ENCODE measurements at regions of chr6 and their contacts with region 1.

Region 1: GRCh38 chr6:137811121-137811915 is 55.7 kb upstream of the TNFAIP3 start:
- H3K4me3 Mint-ChIP-seq: peak overlapping the region; percentile 60
- H3K27ac Mint-ChIP-seq: peak overlapping the region; percentile 66
- H3K4me1 Mint-ChIP-seq: peaks cover 36% of the 10 kb centered on the region
- H3K27me3 Mint-ChIP-seq: peaks cover 30% of the 10 kb centered on the region

Region 2: DNA sequence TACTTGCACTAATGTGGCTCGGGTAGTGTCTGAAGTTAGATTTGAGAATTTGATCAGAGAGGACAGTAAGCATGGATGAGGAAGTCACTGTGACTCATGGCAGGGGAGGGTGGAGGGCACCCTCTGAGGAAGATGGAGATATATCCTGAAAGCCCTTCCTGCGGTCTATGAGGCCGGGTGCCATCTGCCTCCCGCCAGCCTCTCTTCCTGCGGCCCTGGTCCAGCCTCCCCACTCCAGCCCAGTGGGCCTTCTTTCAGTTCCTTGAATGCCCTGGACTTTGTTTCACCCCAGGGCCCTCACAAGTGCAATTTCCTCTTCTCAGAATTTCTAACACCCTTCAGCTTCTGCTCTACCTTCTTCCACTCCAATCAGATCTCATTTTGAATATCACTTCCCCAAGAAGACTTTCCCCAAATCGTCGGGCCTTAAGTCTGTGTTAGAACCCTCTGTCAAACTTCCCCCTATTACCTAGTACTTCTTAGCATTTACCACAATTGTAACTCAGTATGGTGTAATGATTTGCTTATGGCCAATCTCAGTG is 35.5 kb after region 1 on chr6:
- intact Hi-C with region 1: loop called (anchors 5 kb)
- H3K4me3 Mint-ChIP-seq: no peak overlapping the region
- H3K27ac Mint-ChIP-seq: no peak overlapping the region
- H3K4me1 Mint-ChIP-seq: peaks cover 4% of the 10 kb centered on the region
- H3K27me3 Mint-ChIP-seq: no peaks in the 10 kb centered on the region

Region 3: DNA sequence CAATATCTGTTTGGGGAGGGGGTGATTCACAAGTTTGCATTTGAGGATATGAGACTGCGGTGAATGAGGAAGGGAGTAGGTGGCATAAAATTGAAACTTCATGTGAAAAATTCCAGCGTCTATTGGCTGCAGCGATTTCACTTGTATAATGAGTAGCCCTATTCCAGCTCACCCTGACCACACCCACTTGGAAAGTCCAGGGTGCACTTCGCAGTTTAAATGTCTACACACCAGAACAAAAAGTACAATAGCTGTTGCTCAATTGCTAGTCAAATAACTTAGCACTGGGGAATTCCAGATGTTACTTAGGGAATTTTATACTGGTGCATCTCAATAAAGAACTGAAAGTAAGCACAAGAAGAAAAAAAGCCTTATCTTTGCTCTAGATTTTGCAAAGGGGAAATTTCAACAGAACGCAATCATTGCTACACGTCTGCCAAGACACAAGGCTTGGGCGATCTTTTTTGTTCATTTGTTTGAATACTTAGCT is 62.0 kb after region 1 on chr6:
- intact Hi-C with region 1: loop called (anchors 2 kb)
- H3K4me3 Mint-ChIP-seq: peak overlapping the region; percentile 73
- H3K27ac Mint-ChIP-seq: peak overlapping the region; percentile 88
- H3K4me1 Mint-ChIP-seq: peaks cover 67% of the 10 kb centered on the region
- H3K27me3 Mint-ChIP-seq: no peaks in the 10 kb centered on the region

Measured in dendritic cell treated with granulocyte-macrophage colony-stimulating factor and Interleukin-4, amounts not matched to agents 40 ng/mL and 50 ng/mL, for 4 days (primary cell).